Activated CD8-positive, alpha-beta T cell treated with anti-CD3 and anti-CD28 coated beads for 36 hours (primary cell): ENCODE measurements at regions of chr16 and their contacts with region 1.

Region 1: GRCh38 chr16:22297114-22297878 is at the start of gene POLR3E:
- DNase-seq: peak; percentile 100
- ATAC-seq: peak; percentile 91
- H3K4me3 Mint-ChIP-seq: peak within 1 kb of the TSS; percentile 90
- H3K27ac Mint-ChIP-seq: peak within 1 kb of the TSS; percentile 96
- H3K4me1 Mint-ChIP-seq: peaks cover 33% of the 10 kb centered on the region
- H3K27me3 Mint-ChIP-seq: no peaks in the 10 kb centered on the region
- CTCF ChIP-seq: peak; percentile 79
- total RNA-seq, gene POLR3E: 66.9 to 67.9 TPM

Region 2: GRCh38 chr16:22206013-22206841 is 91.1 kb before region 1 on chr16 and contains the start of gene EEF2K:
- CTCF ChIA-PET with region 1: interaction called, 40 read pairs
- POLR2A ChIA-PET with region 1: interaction called, 35 read pairs
- intact Hi-C with region 1: no loop called
- DNase-seq: peak; percentile 93
- ATAC-seq: peak; percentile 80
- H3K4me3 Mint-ChIP-seq: peak within 1 kb of the TSS; percentile 97
- H3K27ac Mint-ChIP-seq: peak within 1 kb of the TSS; percentile 96
- H3K4me1 Mint-ChIP-seq: peaks cover 40% of the 10 kb centered on the region
- H3K27me3 Mint-ChIP-seq: no peaks in the 10 kb centered on the region
- CTCF ChIP-seq: peak; percentile 59
- total RNA-seq, gene EEF2K: 28.6 to 31.2 TPM

Region 3: GRCh38 chr16:22255335-22255734 is 42.0 kb before region 1 on chr16:
- CTCF ChIA-PET with region 1: no interaction called
- POLR2A ChIA-PET with region 1: no interaction called
- intact Hi-C with region 1: no loop called
- DNase-seq: peak; percentile 19
- ATAC-seq: no peak
- H3K4me3 Mint-ChIP-seq: no peak overlapping the region
- H3K27ac Mint-ChIP-seq: no peak overlapping the region
- H3K4me1 Mint-ChIP-seq: no peaks in the 10 kb centered on the region
- H3K27me3 Mint-ChIP-seq: no peaks in the 10 kb centered on the region
- CTCF ChIP-seq: no peak

Region 4: DNA sequence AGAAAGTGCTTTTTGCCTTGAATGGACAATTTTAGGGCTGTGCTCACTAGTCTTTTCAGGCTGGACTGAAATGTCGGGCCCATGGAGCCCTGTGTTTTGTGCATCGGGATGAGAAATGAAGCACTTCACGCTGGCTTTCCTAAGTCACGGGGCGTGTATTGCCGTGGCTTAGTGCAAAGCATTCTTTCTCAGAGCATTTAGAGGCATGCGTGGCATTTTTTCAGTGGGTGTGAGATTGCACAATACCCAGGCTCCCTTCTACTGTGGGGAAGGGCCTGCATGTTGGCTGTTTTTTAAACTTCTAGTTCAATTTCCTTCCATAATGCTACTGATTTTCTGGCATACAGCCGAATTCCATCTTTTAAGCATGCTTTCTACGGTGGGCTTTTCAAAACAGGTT is 12.7 kb before region 1 on chr16:
- CTCF ChIA-PET with region 1: interaction called, 12 read pairs
- POLR2A ChIA-PET with region 1: interaction called, 4 read pairs
- intact Hi-C with region 1: no loop called
- DNase-seq: no peak
- ATAC-seq: no peak
- H3K4me3 Mint-ChIP-seq: no peak overlapping the region
- H3K27ac Mint-ChIP-seq: no peak overlapping the region
- H3K4me1 Mint-ChIP-seq: peaks cover 2% of the 10 kb centered on the region
- H3K27me3 Mint-ChIP-seq: no peaks in the 10 kb centered on the region
- CTCF ChIP-seq: no peak

Region 5: GRCh38 chr16:22311520-22311919 is 14.2 kb after region 1 on chr16:
- CTCF ChIA-PET with region 1: interaction called, 10 read pairs
- POLR2A ChIA-PET with region 1: interaction called, 8 read pairs
- intact Hi-C with region 1: no loop called
- DNase-seq: no peak
- ATAC-seq: no peak
- H3K4me3 Mint-ChIP-seq: no peak overlapping the region
- H3K27ac Mint-ChIP-seq: no peak overlapping the region
- H3K4me1 Mint-ChIP-seq: no peaks in the 10 kb centered on the region
- H3K27me3 Mint-ChIP-seq: no peaks in the 10 kb centered on the region
- CTCF ChIP-seq: no peak

Region 6: DNA sequence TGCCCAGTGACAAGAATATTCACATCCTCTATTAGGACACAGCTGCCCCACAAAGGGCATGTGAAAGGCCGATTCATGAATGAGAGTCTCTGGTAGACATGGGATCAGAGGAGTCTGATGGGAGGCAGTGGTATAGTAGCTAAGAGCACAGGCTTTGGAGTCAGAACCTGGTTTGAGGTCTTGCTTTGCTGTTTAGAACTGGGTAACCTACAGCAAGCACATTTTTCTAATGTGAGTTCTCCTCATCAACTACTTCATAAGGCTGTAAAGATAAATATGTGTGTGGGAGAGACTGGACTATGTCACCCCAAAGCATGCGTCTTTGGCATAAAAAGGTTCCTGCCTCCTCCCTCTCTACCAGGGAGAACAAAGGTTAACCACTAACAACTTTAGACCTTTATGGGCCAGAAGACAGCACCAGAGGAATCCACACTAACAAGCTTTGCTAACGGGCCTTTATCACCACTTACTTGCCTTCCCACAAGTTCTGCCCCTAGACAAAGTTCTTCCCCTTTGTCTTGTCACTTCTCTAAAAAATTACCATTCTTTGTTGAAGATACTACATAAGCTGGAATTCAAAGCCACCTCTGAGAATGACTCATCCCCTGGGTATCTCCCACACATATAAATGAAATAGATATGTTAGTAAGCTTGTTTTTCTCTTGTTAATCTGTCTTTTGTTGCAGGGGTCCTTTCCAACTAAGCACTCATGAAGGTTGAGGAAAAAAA is 56.1 kb after region 1 on chr16:
- CTCF ChIA-PET with region 1: interaction called, 8 read pairs
- POLR2A ChIA-PET with region 1: interaction called, 3 read pairs
- intact Hi-C with region 1: loop called (anchors 5 kb)
- DNase-seq: peak; percentile 27
- ATAC-seq: peak; percentile 67
- H3K4me3 Mint-ChIP-seq: peak overlapping the region; percentile 46
- H3K27ac Mint-ChIP-seq: peak overlapping the region; percentile 97
- H3K4me1 Mint-ChIP-seq: peaks cover 58% of the 10 kb centered on the region
- H3K27me3 Mint-ChIP-seq: no peaks in the 10 kb centered on the region
- CTCF ChIP-seq: no peak